PC-9 (cell line): ENCODE measurements at regions of chr10 and their contacts with region 1.

Region 1: GRCh38 chr10:73456187-73456890 is 23.0 kb upstream of the MSS51 start:
- DNase-seq: no peak
- H3K4me3 ChIP-seq: no peak overlapping the region
- H3K27ac ChIP-seq: no peak overlapping the region
- H3K4me1 ChIP-seq: no peaks in the 10 kb centered on the region
- H3K27me3 ChIP-seq: no peaks in the 10 kb centered on the region
- CTCF ChIP-seq: no peak

Region 2: GRCh38 chr10:73561192-73561591 is 104.9 kb after region 1 on chr10:
- CTCF ChIA-PET with region 1: interaction called, 12 read pairs
- POLR2A ChIA-PET with region 1: no interaction called
- intact Hi-C with region 1: no loop called
- DNase-seq: no peak
- H3K4me3 ChIP-seq: no peak overlapping the region
- H3K27ac ChIP-seq: no peak overlapping the region
- H3K4me1 ChIP-seq: no peaks in the 10 kb centered on the region
- H3K27me3 ChIP-seq: no peaks in the 10 kb centered on the region
- CTCF ChIP-seq: no peak